Thyroid gland (tissue), 4 donors: ENCODE measurements at regions of chr7 and their contacts with region 1.

Region 1: DNA sequence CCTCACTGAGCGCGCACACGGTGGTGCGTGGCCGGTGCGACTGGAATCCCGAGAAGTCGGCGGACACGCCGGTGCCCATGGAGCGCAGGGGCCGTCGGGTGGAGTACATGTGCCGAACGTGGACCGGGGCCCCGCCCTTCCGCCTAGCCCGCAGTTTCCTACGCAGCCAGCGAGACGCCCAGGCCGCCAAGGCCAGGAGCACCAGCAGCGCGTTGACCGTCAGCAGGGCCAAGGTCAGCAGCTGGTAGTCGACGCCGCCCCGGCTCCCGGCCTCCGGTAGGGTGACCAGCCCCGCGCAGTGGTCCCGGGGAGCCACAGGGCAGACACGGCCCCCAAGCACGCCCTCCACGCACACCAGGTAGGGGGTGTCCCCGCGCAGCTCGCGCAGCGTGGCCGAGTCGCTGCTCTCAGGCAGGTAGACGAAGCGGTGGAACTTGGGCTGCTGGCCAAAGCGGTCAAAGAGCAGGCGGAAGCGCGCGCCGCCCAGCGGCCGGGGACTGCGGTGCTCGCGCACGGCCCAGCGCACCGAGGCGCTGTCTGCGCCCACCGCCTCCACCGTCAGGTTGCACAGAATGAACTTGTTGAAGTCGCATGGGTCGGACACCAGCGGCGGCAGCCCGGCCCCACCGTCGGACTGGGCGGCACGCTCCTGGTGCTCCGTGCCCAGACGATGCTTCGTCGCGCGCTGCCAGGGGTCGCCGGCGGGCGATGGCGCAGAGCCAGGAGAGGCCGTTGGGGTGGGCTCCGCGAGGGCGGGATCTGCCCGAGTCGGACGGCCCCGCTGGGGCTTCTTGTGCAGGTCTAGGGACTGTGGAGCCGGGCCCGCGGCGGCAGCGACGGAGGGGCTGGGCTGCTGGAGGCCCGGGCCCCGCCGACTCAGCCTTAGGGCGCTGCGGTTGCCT is 2.2 kb downstream of the TRIL start:
- DNase-seq: peak; percentile 92 to 94
- H3K4me3 ChIP-seq: peak overlapping the region; percentile 44 to 61 (median 46)
- H3K27ac ChIP-seq: peak overlapping the region; percentile 58 to 81 (median 73)
- H3K4me1 ChIP-seq: peaks cover 19 to 40% of the 10 kb centered on the region in 2 donors
- H3K27me3 ChIP-seq: no peaks in the 10 kb centered on the region
- CTCF ChIP-seq: peak; percentile 48 to 90 (median 76)
- POLR2A ChIP-seq: no peak

Region 2: DNA sequence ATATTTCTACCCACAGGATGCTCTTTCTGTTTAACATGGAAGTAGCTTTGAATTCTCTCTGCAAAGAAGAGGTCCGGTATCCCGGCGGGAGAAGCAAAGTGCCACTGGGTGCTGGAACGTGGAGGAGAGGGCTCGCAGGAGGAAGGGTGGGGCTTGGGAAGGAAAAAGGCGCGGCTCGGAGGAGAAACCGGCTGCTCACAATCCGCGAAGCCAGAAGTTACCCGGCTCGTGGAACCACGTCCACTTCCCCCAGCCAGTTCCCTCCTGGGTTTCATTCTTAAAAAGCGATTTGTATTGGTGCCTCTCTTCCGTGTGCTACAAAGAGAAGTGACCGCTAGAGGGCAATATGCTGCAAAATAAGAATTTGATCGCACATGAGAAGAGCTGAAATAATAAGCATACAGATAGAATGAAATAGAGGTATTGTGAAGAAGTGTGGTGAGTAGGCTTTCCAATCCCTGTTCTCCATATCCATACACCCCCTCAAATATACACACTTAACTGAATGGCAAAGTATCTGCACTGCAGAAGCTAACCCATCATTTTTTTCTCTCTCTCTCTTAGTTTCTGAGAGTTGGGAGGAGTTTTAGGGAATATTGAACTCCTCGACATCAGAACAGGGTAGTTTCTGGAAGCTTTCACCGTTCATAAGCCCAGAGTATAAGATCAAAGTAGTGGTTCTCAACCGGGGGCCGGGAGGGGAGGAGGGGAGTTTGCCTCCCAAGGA is 28.9 kb before region 1 on chr7:
- intact Hi-C with region 1: loop called (anchors 5 kb)
- DNase-seq: peak; percentile 80 to 81
- H3K4me3 ChIP-seq: peak overlapping the region in 1 of 3 donors; percentile 17
- H3K27ac ChIP-seq: peak overlapping the region in 2 of 3 donors; percentile 19 to 24
- H3K4me1 ChIP-seq: peaks cover 5 to 10% of the 10 kb centered on the region in 2 donors
- H3K27me3 ChIP-seq: no peaks in the 10 kb centered on the region
- CTCF ChIP-seq: peak; percentile 57 to 91 (median 81)
- POLR2A ChIP-seq: no peak

Region 3: GRCh38 chr7:29119538-29120199 is 163.7 kb after region 1 on chr7:
- intact Hi-C with region 1: no loop called
- DNase-seq: no peak
- H3K4me3 ChIP-seq: no peak overlapping the region
- H3K27ac ChIP-seq: no peak overlapping the region
- H3K4me1 ChIP-seq: peaks cover 7 to 8% of the 10 kb centered on the region in 2 donors
- H3K27me3 ChIP-seq: no peaks in the 10 kb centered on the region
- CTCF ChIP-seq: no peak
- POLR2A ChIP-seq: no peak